Activated naive CD4-positive, alpha-beta T cell treated with anti-CD3 and anti-CD28 coated beads for 36 hours (primary cell): ENCODE measurements at regions of chr19 and their contacts with region 1.

Region 1: DNA sequence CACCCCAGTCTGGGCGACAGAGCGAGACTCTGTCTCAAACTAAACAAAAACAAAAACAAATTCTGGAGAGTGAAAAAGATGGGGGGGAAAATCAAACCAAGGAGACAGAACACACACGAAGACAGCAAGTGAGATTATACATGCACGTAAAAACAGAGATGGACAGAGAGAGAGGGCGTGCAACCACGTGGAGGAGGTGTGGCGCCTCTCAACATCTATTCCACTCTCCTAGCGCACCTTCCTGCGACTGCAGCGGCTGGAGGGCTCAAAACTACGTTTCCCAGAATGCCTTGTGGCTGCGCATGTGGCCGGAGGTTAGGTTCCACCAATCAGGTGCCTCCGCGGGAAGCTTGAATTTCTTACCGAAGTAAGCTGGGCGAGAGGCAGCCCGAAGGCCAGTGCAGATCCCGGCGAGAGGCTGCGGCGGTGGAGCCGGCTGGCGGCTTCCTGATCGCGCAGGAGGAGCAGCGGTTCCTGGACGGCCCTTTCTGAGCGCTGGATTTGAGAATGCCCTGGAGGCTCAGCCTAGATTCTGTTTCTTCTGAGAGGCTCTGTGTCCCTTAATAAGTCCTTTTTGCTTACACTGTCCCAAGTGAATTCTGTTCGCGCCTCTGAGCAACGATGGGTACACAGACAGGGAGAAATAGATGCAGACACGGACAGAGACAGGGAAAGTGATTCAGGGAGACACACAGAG is 13.1 kb upstream of the NANOS2 start:
- DNase-seq: peak; percentile 96
- H3K4me3 Mint-ChIP-seq: peak overlapping the region; percentile 74
- H3K27ac Mint-ChIP-seq: no peak overlapping the region
- H3K4me1 Mint-ChIP-seq: peaks cover 7% of the 10 kb centered on the region
- H3K27me3 Mint-ChIP-seq: peaks cover 5% of the 10 kb centered on the region

Region 2: DNA sequence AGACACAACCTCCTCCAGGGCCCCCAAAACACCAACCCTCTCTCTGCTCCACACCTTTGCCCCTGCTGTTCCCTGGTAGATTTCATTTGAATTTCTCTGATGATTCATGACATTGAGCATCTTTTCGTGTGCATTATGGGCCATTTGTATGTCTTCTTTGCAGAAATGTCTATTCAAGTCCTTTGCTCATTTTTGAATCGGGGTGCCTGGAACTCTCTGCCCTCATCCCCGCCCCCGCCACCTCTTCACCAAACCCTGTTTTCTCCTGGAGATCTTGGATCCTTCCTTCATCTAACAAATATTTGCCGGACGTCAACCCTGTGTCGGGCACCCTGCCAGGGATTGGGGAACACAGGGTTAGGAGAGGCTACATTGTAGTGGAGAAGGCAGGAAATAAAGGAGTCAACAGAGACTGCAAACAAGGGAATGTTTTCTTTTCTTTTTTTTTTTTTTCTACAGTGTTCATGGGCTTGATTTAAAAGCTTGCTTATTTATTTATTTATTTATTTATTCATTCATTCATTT is 886.2 kb after region 1 on chr19:
- CTCF ChIA-PET with region 1: no interaction called
- intact Hi-C with region 1: loop called (anchors 5 kb)
- DNase-seq: no peak
- H3K4me3 Mint-ChIP-seq: no peak overlapping the region
- H3K27ac Mint-ChIP-seq: no peak overlapping the region
- H3K4me1 Mint-ChIP-seq: no peaks in the 10 kb centered on the region
- H3K27me3 Mint-ChIP-seq: no peaks in the 10 kb centered on the region